ENCODE measurements at regions of chr10 and their contacts with region 1.

Region 1: GRCh38 chr10:14039968-14040671 is 290.6 kb downstream of the FRMD4A start:
- DNase-seq: peak; percentile 79 to 84
- H3K4me3 ChIP-seq: no peak overlapping the region
- H3K4me3 Mint-ChIP-seq: peak overlapping the region; percentile 29
- H3K27ac Mint-ChIP-seq: peak overlapping the region; percentile 83
- H3K4me1 ChIP-seq: peaks cover 39% of the 10 kb centered on the region
- H3K4me1 Mint-ChIP-seq: peaks cover 35% of the 10 kb centered on the region
- H3K27me3 ChIP-seq: no peaks in the 10 kb centered on the region
- H3K27me3 Mint-ChIP-seq: no peaks in the 10 kb centered on the region
- CTCF ChIP-seq: no peak

Region 2: GRCh38 chr10:13847201-13847631 is 192.9 kb before region 1 on chr10:
- CTCF ChIA-PET with region 1: no interaction called
- POLR2A ChIA-PET with region 1: no interaction called
- intact Hi-C with region 1: no loop called
- DNase-seq: peak in 1 of 2 experiments; percentile 41
- H3K4me3 ChIP-seq: no peak overlapping the region
- H3K4me3 Mint-ChIP-seq: no peak overlapping the region
- H3K27ac Mint-ChIP-seq: no peak overlapping the region
- H3K4me1 ChIP-seq: peaks cover 10% of the 10 kb centered on the region; the same call in 1 of the 2 replicates
- H3K4me1 Mint-ChIP-seq: no peaks in the 10 kb centered on the region
- H3K27me3 ChIP-seq: no peaks in the 10 kb centered on the region
- H3K27me3 Mint-ChIP-seq: no peaks in the 10 kb centered on the region
- CTCF ChIP-seq: peak; percentile 41

Region 3: GRCh38 chr10:14009371-14010100 is 30.6 kb before region 1 on chr10:
- CTCF ChIA-PET with region 1: no interaction called
- POLR2A ChIA-PET with region 1: no interaction called
- intact Hi-C with region 1: no loop called
- DNase-seq: no peak
- H3K4me3 ChIP-seq: no peak overlapping the region
- H3K4me3 Mint-ChIP-seq: no peak overlapping the region
- H3K27ac Mint-ChIP-seq: no peak overlapping the region
- H3K4me1 ChIP-seq: no peaks in the 10 kb centered on the region
- H3K4me1 Mint-ChIP-seq: no peaks in the 10 kb centered on the region
- H3K27me3 ChIP-seq: no peaks in the 10 kb centered on the region
- H3K27me3 Mint-ChIP-seq: peaks cover 25% of the 10 kb centered on the region
- CTCF ChIP-seq: no peak

Region 4: DNA sequence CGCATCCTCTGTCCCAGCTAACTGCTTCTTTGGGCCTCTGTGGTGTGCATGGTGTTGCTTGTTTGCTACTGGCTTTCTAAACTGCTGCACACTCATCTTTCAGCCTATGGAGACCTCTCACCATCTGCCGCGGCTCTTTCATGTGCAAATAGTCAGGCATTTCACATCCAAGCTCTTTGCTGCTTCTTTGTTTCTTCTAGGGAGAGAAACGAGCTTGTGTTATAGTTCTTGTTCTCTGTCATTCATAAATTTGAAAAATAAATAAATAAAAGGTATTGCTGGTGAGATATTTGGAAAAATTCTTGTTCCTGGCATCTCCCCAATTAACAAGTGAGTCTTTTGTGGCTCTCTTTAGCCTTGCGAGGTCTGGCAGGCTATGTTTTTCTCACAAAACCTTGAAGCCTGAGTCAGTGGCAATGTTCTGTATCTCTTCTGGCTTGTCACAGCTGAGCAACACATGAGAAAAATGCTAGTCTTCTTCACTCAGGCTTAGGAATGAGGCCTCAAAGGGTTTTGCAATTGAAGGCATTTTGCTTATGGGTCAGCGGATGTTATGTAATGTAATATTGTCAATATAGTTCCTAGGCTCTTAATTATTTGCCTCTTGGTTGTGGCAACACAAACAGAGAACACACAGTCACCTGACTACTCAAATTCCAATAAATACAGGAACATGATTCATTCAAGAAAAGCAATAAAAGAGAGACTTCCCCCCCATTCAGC is 16.7 kb after region 1 on chr10:
- CTCF ChIA-PET with region 1: no interaction called
- POLR2A ChIA-PET with region 1: interaction called, 7 read pairs
- intact Hi-C with region 1: loop called (anchors 1 kb)
- DNase-seq: peak in 1 of 2 experiments; percentile 28
- H3K4me3 ChIP-seq: no peak overlapping the region
- H3K4me3 Mint-ChIP-seq: no peak overlapping the region
- H3K27ac Mint-ChIP-seq: no peak overlapping the region
- H3K4me1 ChIP-seq: no peaks in the 10 kb centered on the region
- H3K4me1 Mint-ChIP-seq: no peaks in the 10 kb centered on the region
- H3K27me3 ChIP-seq: no peaks in the 10 kb centered on the region
- H3K27me3 Mint-ChIP-seq: no peaks in the 10 kb centered on the region
- CTCF ChIP-seq: no peak

Region 5: DNA sequence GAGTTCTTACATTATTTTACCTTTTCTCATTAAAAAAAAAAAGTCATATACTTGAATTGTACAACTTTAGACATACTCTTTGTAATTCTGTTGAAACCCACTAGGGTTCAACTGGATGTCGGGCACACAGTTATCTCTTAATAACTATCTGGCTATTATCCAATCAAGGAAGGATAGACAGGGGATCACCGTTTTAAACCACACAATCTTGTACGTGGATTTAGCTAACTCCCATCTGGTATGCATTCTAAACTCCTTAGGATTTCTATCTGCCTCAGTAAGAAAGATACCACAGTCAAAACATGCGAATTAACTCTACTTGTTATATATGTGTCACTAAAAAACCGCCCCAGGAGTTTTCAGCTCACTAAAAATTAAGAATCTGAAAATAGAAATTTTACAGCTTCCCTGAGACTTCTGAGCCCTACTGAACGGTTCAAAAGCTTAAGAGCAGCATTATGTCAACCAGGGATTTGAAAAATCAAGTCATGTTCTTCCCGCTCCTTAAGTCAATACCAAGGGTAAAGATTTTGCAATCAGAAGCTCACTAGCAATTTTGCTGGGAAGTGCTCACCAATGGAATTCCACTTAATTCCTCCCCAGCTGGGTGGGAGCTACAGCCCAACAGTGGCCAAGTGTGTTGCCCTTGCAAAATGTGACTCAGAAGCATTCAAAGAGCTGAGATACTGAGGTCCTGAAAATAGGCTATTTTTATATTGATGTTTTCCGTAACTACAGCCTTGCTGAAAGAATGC is 23.6 kb after region 1 on chr10:
- CTCF ChIA-PET with region 1: interaction called, 4 read pairs
- POLR2A ChIA-PET with region 1: interaction called, 14 read pairs
- intact Hi-C with region 1: no loop called
- DNase-seq: peak in 1 of 2 experiments; percentile 61
- H3K4me3 ChIP-seq: no peak overlapping the region
- H3K4me3 Mint-ChIP-seq: no peak overlapping the region
- H3K27ac Mint-ChIP-seq: no peak overlapping the region
- H3K4me1 ChIP-seq: no peaks in the 10 kb centered on the region
- H3K4me1 Mint-ChIP-seq: no peaks in the 10 kb centered on the region
- H3K27me3 ChIP-seq: no peaks in the 10 kb centered on the region
- H3K27me3 Mint-ChIP-seq: no peaks in the 10 kb centered on the region
- CTCF ChIP-seq: no peak

Region 6: DNA sequence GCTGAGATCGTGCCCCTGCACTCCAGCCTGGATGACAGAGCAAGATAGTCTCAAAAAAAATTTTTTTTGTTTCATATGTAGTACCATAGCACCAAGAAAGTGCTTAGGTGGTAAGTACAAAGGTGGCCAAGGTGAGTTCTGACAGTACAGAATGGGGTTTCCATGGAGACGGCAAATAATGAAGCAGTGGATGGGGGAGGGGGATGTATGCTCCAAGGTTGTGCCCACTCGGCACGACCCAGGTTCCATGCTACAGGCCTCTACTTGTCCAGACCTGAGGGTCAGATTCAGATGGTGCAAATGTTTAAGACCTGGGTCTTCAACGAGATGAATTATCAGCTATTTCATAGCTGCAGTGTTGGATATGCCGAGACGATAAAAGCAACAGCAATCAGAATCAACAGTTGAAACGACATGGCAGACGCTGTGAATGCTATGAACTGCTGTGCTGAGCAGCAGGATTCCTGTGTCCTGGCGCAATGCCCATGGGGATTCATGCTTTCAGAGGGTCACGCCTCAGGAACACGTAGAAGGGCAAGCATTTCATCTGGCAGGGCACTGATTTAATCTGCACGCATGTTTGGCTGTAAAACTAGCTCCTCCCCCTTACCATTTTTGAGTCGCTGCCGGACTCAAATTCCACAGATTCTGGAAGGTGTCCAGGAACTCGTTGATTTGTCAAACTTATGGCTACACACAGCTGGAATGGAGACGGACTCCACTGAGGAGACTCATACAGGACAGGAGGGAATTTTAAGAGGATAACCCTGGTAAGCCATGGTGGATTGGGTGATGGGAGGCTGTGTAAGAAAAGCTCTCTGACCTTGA is 34.2 kb after region 1 on chr10:
- CTCF ChIA-PET with region 1: no interaction called
- POLR2A ChIA-PET with region 1: no interaction called
- intact Hi-C with region 1: no loop called
- DNase-seq: peak; percentile 57 to 63
- H3K4me3 ChIP-seq: peak overlapping the region; percentile 27
- H3K4me3 Mint-ChIP-seq: peak overlapping the region; percentile 68
- H3K27ac Mint-ChIP-seq: peak overlapping the region; percentile 23
- H3K4me1 ChIP-seq: peaks cover 7% of the 10 kb centered on the region
- H3K4me1 Mint-ChIP-seq: peaks cover 7% of the 10 kb centered on the region
- H3K27me3 ChIP-seq: no peaks in the 10 kb centered on the region; the same call in 1 of the 2 replicates
- H3K27me3 Mint-ChIP-seq: peaks cover 6% of the 10 kb centered on the region
- CTCF ChIP-seq: no peak

Region 7: GRCh38 chr10:14123139-14123538 is 83.0 kb after region 1 on chr10:
- CTCF ChIA-PET with region 1: no interaction called
- POLR2A ChIA-PET with region 1: no interaction called
- intact Hi-C with region 1: no loop called
- DNase-seq: no peak
- H3K4me3 ChIP-seq: no peak overlapping the region
- H3K4me3 Mint-ChIP-seq: no peak overlapping the region
- H3K27ac Mint-ChIP-seq: no peak overlapping the region
- H3K4me1 ChIP-seq: no peaks in the 10 kb centered on the region
- H3K4me1 Mint-ChIP-seq: no peaks in the 10 kb centered on the region
- H3K27me3 ChIP-seq: no peaks in the 10 kb centered on the region
- H3K27me3 Mint-ChIP-seq: peaks cover 3% of the 10 kb centered on the region
- CTCF ChIP-seq: no peak

Region 8: GRCh38 chr10:14173706-14174594 is 133.8 kb after region 1 on chr10:
- CTCF ChIA-PET with region 1: no interaction called
- POLR2A ChIA-PET with region 1: no interaction called
- intact Hi-C with region 1: loop called (anchors 5 kb)
- DNase-seq: peak; percentile 45 to 62
- H3K4me3 ChIP-seq: peak overlapping the region; percentile 50
- H3K4me3 Mint-ChIP-seq: peak overlapping the region; percentile 74
- H3K27ac Mint-ChIP-seq: peak overlapping the region; percentile 14
- H3K4me1 ChIP-seq: 0 out of 2 replicates have a peak, but pooled peaks cover 5% of the 10 kb centered on the region
- H3K4me1 Mint-ChIP-seq: peaks cover 4% of the 10 kb centered on the region
- H3K27me3 ChIP-seq: no peaks in the 10 kb centered on the region
- H3K27me3 Mint-ChIP-seq: peaks cover 15% of the 10 kb centered on the region
- CTCF ChIP-seq: no peak